ENCODE measurements at regions of chr14 and their contacts with region 1.

Region 1: DNA sequence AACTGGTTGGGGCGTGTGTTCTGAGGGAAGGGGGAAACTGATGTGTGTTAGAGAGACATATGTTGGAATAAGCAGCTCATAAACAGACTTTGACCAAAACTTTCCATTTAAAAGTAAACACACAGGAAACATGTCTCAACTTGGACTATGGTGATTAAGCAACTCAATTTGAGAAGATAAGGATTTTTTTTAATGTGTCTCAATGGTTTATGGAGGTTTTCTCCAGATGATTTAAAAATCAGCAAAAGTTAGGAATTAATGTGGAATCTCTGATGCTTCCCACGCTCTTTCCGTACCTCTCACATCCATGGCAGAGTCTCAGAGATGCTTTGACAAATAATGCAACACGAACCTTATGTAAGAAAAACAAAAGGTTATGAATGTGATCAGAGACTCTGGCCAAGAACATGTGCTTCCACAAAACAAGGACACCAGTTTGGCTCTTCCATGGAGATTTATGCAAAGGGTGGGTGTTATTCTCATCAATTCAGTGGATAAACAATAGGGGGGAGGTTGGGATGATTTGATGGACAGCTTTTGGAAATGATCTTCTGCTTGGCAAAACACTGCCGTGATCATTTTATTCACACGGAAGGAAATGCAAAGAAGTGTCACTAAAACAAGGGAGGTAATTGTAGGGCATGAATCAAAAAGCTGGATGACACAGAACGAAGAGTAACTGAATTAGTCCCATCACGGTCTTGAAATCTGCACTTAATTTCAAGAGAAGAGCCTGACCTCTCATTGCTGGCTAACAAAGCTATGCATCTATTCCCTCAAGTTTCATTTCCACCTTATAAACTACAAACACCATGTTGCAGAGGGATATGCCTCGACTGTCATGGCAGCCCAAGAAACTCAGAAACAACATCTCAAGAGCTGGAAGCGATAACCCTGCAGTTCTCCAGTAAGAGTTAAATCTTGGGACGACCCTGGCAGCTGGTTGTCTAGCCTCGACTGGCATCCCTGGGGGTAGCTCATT is 76.5 kb downstream of the FOXN3 start:
- DNase-seq: no peak
- H3K4me3 Mint-ChIP-seq: no peak overlapping the region
- H3K27ac Mint-ChIP-seq: no peak overlapping the region
- H3K4me1 Mint-ChIP-seq: peaks cover 44% of the 10 kb centered on the region
- H3K27me3 Mint-ChIP-seq: no peaks in the 10 kb centered on the region

Region 2: GRCh38 chr14:89276424-89276975 is 64.0 kb before region 1 on chr14:
- CTCF ChIA-PET with region 1: no interaction called
- POLR2A ChIA-PET with region 1: no interaction called
- intact Hi-C with region 1: loop called (anchors 5 kb)
- DNase-seq: peak; percentile 92
- H3K4me3 Mint-ChIP-seq: peak overlapping the region; percentile 60
- H3K27ac Mint-ChIP-seq: peak overlapping the region; percentile 94
- H3K4me1 Mint-ChIP-seq: peaks cover 77% of the 10 kb centered on the region
- H3K27me3 Mint-ChIP-seq: no peaks in the 10 kb centered on the region

Region 3: GRCh38 chr14:90396341-90397339 is 1056.1 kb after region 1 on chr14 and contains the start of gene CALM1:
- CTCF ChIA-PET with region 1: no interaction called
- POLR2A ChIA-PET with region 1: no interaction called
- intact Hi-C with region 1: no loop called
- DNase-seq: peak; percentile 95
- H3K4me3 Mint-ChIP-seq: peak within 1 kb of the TSS; percentile 97
- H3K27ac Mint-ChIP-seq: peak within 1 kb of the TSS; percentile 99
- H3K4me1 Mint-ChIP-seq: peaks cover 27% of the 10 kb centered on the region
- H3K27me3 Mint-ChIP-seq: no peaks in the 10 kb centered on the region
- total RNA-seq, gene CALM1: 725 to 733 TPM